Astrocyte of the cerebellum (primary cell): ENCODE measurements at regions of chr10 and their contacts with region 1.

Region 1: GRCh38 chr10:80509403-80510161 is 28.1 kb upstream of the SH2D4B start:
- DNase-seq: peak; percentile 24
- H3K4me3 ChIP-seq: no peak overlapping the region
- CTCF ChIP-seq: no peak

Region 2: DNA sequence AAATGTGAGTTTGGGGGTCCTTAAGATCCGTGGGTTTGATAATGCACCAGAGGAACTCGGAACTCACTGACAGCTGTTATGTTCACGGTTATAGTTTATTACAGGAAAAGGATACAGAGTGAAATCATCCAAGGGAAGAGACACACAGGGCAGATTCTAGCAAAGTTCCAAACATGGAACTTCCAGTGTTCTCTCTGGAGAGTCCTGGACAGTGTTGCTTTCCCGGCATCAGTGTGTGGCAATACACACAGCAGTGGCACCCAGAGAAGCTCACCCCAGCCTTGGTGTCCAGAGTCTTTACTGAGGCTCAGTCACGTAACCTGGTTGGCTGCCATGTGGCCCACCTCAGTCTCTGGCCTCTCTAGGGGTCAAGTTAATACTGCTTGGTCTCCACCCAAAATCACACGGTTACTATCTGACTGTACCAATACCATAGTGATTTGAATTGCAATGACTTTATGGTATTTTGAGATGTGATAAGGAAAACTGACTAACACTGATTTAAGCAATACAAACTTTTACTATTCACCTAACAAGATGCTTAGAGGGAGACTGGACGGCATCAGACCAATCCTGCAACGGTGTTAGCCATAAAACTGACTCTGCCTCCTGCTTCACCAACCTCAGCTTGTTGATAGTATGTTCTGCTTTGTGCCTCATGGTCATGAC is 109.3 kb before region 1 on chr10:
- in situ Hi-C with region 1: loop called (anchors 5 kb)
- DNase-seq: no peak
- H3K4me3 ChIP-seq: no peak overlapping the region
- CTCF ChIP-seq: no peak

Region 3: DNA sequence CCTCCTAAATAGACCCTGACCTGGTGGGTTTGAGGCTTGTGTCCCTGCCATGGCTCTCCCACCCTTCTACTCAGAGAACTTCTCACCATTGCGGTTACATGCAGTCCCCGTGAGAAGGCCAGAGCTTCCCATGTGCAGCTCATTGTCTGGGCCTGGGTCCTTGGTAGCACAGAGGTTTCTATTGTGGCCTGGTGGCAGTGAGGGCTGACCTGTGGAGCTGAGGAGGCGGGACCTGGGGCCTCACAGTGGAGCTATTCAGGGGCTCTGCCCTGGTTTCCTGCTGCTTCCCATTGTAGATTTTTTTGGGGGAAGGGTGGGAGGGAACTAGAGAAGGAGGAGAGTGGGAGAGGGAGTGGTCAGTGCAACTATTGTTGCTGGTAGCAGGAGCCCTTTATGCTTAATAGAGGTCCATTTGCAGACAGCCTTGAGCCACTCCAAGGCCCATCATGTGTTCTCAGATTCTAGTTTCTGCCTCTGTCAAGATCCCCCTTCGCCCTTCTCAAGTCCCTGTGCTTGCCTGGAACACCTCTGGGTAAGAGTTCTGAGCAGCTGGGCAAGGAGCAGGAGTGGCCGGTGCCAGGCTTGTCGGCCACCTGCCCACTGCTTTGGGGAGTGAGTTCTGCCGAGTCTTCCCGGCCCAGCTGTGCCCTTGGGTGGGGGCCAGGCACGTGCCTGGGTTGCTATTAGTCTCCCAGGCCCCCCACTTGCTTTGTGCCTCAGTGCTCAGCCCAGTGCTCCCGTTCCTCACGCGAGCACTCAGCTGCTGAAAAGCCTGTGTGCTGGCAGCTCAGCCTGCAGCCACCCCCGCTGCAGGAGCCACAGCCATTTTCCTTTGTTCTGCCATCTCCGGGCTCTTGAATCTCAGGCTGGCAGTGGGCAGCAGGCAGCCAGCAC is 44.8 kb before region 1 on chr10:
- in situ Hi-C with region 1: loop called (anchors 5 kb)
- DNase-seq: no peak
- H3K4me3 ChIP-seq: no peak overlapping the region
- CTCF ChIP-seq: no peak

Region 4: DNA sequence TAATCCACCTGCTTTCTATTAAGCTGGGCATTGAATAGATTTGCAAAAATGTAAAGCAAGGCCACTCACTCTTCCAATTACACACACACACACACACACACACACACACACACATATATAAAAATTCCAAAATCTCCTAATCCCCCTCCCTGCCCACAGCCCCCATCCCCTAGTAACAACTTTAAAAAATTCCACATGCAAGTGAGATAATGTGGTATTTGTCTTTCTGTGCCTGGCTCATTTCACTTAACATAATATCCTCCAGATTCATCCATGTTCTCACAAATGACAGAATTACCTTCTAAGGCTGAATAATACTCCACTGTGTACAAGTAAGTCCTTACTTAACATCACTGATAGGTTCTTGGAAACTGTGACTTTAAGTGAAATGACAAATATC is 52.4 kb after region 1 on chr10:
- in situ Hi-C with region 1: loop called (anchors 5 kb)
- DNase-seq: no peak
- H3K4me3 ChIP-seq: no peak overlapping the region
- CTCF ChIP-seq: no peak